CD8-positive, alpha-beta T cell (primary cell): ENCODE measurements at regions of chr4 and their contacts with region 1.

Region 1: GRCh38 chr4:59063015-59063720 is 1953.0 kb upstream of the IGFBP7 start:
- DNase-seq: no peak
- ATAC-seq: no peak
- H3K4me3 ChIP-seq: no peak overlapping the region
- H3K4me3 Mint-ChIP-seq: no peak overlapping the region
- H3K27ac ChIP-seq: no peak overlapping the region
- H3K27ac Mint-ChIP-seq: no peak overlapping the region
- H3K4me1 ChIP-seq: no peaks in the 10 kb centered on the region
- H3K4me1 Mint-ChIP-seq: no peaks in the 10 kb centered on the region
- H3K27me3 ChIP-seq: no peaks in the 10 kb centered on the region
- H3K27me3 Mint-ChIP-seq: no peaks in the 10 kb centered on the region
- CTCF ChIP-seq: no peak

Region 2: DNA sequence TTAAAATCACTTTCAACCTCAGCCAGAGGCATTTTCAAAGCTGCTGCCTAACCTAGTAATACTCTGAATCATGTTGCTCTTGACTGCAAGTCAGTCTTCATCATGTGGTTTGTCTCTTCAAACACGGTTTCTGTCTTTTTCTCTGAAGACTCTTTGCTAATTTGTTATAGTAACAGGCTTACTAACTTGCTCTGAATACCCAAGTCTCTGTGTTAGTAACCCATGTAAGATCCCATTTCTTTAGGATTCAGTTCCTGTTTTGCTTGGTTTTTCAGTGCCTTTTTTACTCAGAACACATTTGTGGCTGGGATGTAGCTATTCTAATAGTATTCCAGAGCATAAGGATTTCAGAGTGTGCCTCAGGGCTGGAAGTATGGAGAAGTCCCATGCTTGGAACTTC is 502.4 kb before region 1 on chr4:
- CTCF ChIA-PET with region 1: no interaction called
- POLR2A ChIA-PET with region 1: no interaction called
- intact Hi-C with region 1: no loop called
- DNase-seq: no peak
- ATAC-seq: no peak
- H3K4me3 ChIP-seq: no peak overlapping the region
- H3K4me3 Mint-ChIP-seq: no peak overlapping the region
- H3K27ac ChIP-seq: no peak overlapping the region
- H3K27ac Mint-ChIP-seq: no peak overlapping the region
- H3K4me1 ChIP-seq: no peaks in the 10 kb centered on the region
- H3K4me1 Mint-ChIP-seq: no peaks in the 10 kb centered on the region
- H3K27me3 ChIP-seq: no peaks in the 10 kb centered on the region
- H3K27me3 Mint-ChIP-seq: no peaks in the 10 kb centered on the region
- CTCF ChIP-seq: no peak

Region 3: DNA sequence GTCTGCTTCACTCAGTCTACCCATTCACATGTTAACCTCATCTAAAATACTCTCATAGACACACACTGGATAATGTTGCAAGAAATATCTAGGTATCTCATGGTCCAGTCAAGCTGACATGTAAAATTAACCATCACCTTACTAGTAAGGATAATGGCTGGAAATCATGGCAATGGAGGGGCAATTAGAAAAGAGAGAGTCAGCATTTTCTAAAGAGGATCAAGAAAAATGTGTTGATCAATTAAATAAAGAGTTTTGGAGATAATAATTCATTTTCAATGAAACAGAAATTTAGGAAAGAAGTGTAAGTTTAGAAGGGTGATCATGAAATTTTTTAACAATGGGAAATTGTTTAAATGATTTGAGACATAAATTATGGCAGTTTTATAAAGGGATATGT is 38.9 kb before region 1 on chr4:
- CTCF ChIA-PET with region 1: no interaction called
- POLR2A ChIA-PET with region 1: no interaction called
- intact Hi-C with region 1: no loop called
- DNase-seq: no peak
- ATAC-seq: no peak
- H3K4me3 ChIP-seq: no peak overlapping the region
- H3K4me3 Mint-ChIP-seq: no peak overlapping the region
- H3K27ac ChIP-seq: no peak overlapping the region
- H3K27ac Mint-ChIP-seq: no peak overlapping the region
- H3K4me1 ChIP-seq: no peaks in the 10 kb centered on the region
- H3K4me1 Mint-ChIP-seq: no peaks in the 10 kb centered on the region
- H3K27me3 ChIP-seq: no peaks in the 10 kb centered on the region
- H3K27me3 Mint-ChIP-seq: no peaks in the 10 kb centered on the region
- CTCF ChIP-seq: no peak

Region 4: DNA sequence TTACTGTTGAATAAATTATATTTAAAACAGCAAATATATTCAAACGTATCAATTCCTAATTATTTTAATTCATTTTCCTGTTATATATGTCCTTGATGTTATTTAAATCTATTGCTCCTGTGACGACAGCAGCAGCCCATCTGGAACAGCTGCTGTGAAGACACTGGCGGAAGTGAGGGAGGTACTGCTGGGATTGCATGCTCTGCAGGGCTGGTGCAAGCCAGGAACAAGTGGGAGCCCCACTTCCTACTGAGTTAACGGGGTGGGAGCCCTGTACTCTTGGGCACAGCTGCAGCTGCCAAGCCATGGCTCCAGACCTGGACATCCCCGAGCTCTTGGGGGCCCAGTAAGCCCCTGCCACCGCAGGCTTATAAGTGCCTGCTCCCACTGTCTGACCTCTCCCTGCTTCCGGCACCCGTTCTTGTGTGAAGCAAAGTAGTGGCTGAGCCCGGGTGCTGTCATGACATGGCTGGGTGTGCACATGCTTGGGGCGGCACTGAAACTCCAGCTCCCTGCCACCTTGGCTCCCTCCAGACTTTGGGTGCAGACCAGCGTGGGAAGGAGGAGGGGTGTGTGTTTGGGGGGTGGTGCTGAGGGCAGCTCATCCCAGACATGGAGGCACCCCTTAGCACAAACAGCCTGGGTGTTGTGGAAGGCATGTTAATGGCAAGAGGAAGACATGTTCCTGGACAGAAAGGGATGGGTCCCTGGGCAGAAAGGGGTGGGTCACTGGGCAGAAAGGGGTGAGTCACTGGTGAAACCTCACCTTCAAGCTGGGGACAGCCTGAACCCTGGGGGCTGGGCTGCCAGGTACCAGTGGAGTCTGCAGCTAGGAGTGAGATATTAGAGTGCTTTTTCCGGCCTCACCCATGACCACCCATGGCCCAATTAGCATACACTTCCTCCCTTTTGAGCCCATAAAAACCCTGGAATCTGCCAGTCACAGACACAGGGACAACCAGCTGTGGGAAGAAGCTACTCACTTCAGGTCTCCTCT is 28.3 kb after region 1 on chr4:
- CTCF ChIA-PET with region 1: no interaction called
- POLR2A ChIA-PET with region 1: no interaction called
- intact Hi-C with region 1: loop called in 1 of 2 experiments (anchors 1 kb)
- DNase-seq: peak in 1 of 9 experiments; percentile 15
- ATAC-seq: no peak
- H3K4me3 ChIP-seq: no peak overlapping the region
- H3K4me3 Mint-ChIP-seq: no peak overlapping the region
- H3K27ac ChIP-seq: no peak overlapping the region
- H3K27ac Mint-ChIP-seq: no peak overlapping the region
- H3K4me1 ChIP-seq: no peaks in the 10 kb centered on the region
- H3K4me1 Mint-ChIP-seq: no peaks in the 10 kb centered on the region
- H3K27me3 ChIP-seq: no peaks in the 10 kb centered on the region
- H3K27me3 Mint-ChIP-seq: no peaks in the 10 kb centered on the region
- CTCF ChIP-seq: no peak